ENCODE measurements at regions of chr11 and their contacts with region 1.

Region 1: GRCh38 chr11:75562048-75562835 is at the start of gene SERPINH1:
- DNase-seq: peak; percentile 72
- ATAC-seq: peak; percentile 88
- H3K4me3 ChIP-seq: peak within 1 kb of the TSS; percentile 77 to 99
- H3K27ac ChIP-seq: peak within 1 kb of the TSS; percentile 96
- H3K4me1 ChIP-seq: peaks cover 17 to 69% of the 10 kb centered on the region in 2 experiments
- H3K27me3 ChIP-seq: no peaks in the 10 kb centered on the region
- CTCF ChIP-seq: no peak
- POLR2A ChIP-seq: peak; percentile 72
- RAD21 ChIP-seq: no peak
- total RNA-seq, gene SERPINH1: 84.9 TPM

Region 2: GRCh38 chr11:75532200-75533048 is 29.8 kb before region 1 on chr11:
- CTCF ChIA-PET with region 1: interaction called, 3 read pairs
- POLR2A ChIA-PET with region 1: interaction called, 14 read pairs
- RAD21 ChIA-PET with region 1: no interaction called
- intact Hi-C with region 1: no loop called
- DNase-seq: peak; percentile 56
- ATAC-seq: peak; percentile 45
- H3K4me3 ChIP-seq: peak overlapping the region in 1 of 2 experiments; percentile 35; a peak in 1 of 4 replicates
- H3K27ac ChIP-seq: no peak overlapping the region; the same call in 1 of the 2 replicates
- H3K4me1 ChIP-seq: peaks cover 33 to 51% of the 10 kb centered on the region in 2 experiments
- H3K27me3 ChIP-seq: no peaks in the 10 kb centered on the region
- CTCF ChIP-seq: peak; percentile 82 to 96 (median 82)
- POLR2A ChIP-seq: no peak
- RAD21 ChIP-seq: peak; percentile 99

Region 3: GRCh38 chr11:75547580-75548058 is 14.6 kb before region 1 on chr11:
- CTCF ChIA-PET with region 1: no interaction called
- POLR2A ChIA-PET with region 1: interaction called, 3 read pairs
- RAD21 ChIA-PET with region 1: no interaction called
- intact Hi-C with region 1: loop called (anchors 1 kb)
- DNase-seq: no peak
- ATAC-seq: peak; percentile 95
- H3K4me3 ChIP-seq: no peak overlapping the region
- H3K27ac ChIP-seq: no peak overlapping the region
- H3K4me1 ChIP-seq: peaks cover 0 to 8% of the 10 kb centered on the region in 2 experiments; a peak in 2 of 4 replicates
- H3K27me3 ChIP-seq: no peaks in the 10 kb centered on the region
- CTCF ChIP-seq: peak; percentile 80 to 93 (median 86); a peak in 5 of 6 replicates
- POLR2A ChIP-seq: no peak
- RAD21 ChIP-seq: peak; percentile 90

Region 4: DNA sequence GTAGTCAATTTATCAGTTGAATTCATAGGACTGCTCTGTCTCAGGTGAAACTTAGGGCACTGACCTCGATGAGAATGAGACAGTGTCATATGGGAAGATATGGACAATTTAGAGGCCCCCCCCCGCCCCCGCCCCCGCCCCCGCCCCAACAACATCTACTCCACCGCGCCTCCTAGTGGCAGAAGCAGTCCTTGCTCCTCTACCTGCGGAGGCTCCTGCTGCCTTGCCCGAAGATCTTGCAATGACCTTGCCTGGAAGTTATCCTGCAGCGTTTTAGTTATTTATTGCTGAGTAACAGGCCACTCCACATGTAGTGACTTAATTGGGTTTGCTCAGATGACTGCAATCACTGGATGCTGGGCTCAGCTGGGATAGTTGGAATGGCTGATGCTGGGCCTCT is 15.0 kb after region 1 on chr11:
- CTCF ChIA-PET with region 1: interaction called, 13 read pairs
- POLR2A ChIA-PET with region 1: interaction called, 5 read pairs
- RAD21 ChIA-PET with region 1: no interaction called
- intact Hi-C with region 1: no loop called
- DNase-seq: no peak
- ATAC-seq: peak; percentile 75
- H3K4me3 ChIP-seq: no peak overlapping the region
- H3K27ac ChIP-seq: no peak overlapping the region
- H3K4me1 ChIP-seq: peaks cover 0 to 4% of the 10 kb centered on the region in 2 experiments; a peak in 1 of 4 replicates
- H3K27me3 ChIP-seq: peaks cover 4% of the 10 kb centered on the region; the same call in 1 of the 2 replicates
- CTCF ChIP-seq: peak; percentile 13 to 70 (median 47); a peak in 5 of 6 replicates
- POLR2A ChIP-seq: no peak
- RAD21 ChIP-seq: peak; percentile 13; the same call in 1 of the 2 replicates